Prostate gland (tissue), 2 donors: ENCODE measurements at regions of chr10 and their contacts with region 1.

Region 1: GRCh38 chr10:28302638-28303488 is at the start of gene MPP7:
- DNase-seq: peak; percentile 98
- H3K4me3 ChIP-seq: peak within 1 kb of the TSS; percentile 82 to 89
- H3K27ac ChIP-seq: peak within 1 kb of the TSS; percentile 89 to 95
- H3K4me1 ChIP-seq: no peaks in the 10 kb centered on the region
- H3K27me3 ChIP-seq: no peaks in the 10 kb centered on the region
- CTCF ChIP-seq: peak; percentile 20 to 71 (median 44)
- POLR2A ChIP-seq: peak; percentile 70
- total RNA-seq, gene MPP7: 10.1 to 16.1 TPM

Region 2: DNA sequence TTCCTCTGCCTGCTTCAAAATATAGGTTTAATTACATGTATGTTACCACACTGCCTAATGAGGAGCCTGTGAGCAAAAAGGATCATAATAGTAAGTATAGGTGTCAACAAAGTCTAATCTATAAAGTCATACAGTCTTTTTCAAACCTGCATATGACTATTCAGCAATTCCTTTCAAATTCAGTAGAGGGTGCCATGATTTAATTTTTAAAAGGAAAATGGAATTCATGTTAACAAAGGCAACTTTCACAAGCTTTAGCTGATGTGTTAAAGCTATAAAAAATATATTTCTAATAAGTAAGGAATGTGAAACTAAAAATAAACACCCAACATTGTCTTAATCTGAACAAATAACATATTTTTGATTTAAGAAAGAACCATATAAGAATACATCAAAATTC is 52.1 kb before region 1 on chr10:
- intact Hi-C with region 1: loop called (anchors 2 kb)
- DNase-seq: no peak
- H3K4me3 ChIP-seq: no peak overlapping the region
- H3K27ac ChIP-seq: no peak overlapping the region
- H3K4me1 ChIP-seq: no peaks in the 10 kb centered on the region
- H3K27me3 ChIP-seq: no peaks in the 10 kb centered on the region
- CTCF ChIP-seq: peak; percentile 19 to 74 (median 52)
- POLR2A ChIP-seq: no peak

Region 3: GRCh38 chr10:28328346-28328745 is 25.5 kb after region 1 on chr10:
- intact Hi-C with region 1: loop called (anchors 2 kb)
- DNase-seq: no peak
- H3K4me3 ChIP-seq: no peak overlapping the region
- H3K27ac ChIP-seq: peak overlapping the region; percentile 62 to 66
- H3K4me1 ChIP-seq: no peaks in the 10 kb centered on the region
- H3K27me3 ChIP-seq: no peaks in the 10 kb centered on the region
- CTCF ChIP-seq: no peak
- POLR2A ChIP-seq: no peak

Region 4: GRCh38 chr10:28381903-28382347 is 79.1 kb after region 1 on chr10:
- intact Hi-C with region 1: loop called (anchors 2 kb)
- DNase-seq: peak; percentile 85
- H3K4me3 ChIP-seq: no peak overlapping the region
- H3K27ac ChIP-seq: no peak overlapping the region
- H3K4me1 ChIP-seq: no peaks in the 10 kb centered on the region
- H3K27me3 ChIP-seq: no peaks in the 10 kb centered on the region
- CTCF ChIP-seq: peak; percentile 95 to 99 (median 97)
- POLR2A ChIP-seq: no peak

Region 5: GRCh38 chr10:28425422-28425821 is 122.6 kb after region 1 on chr10:
- intact Hi-C with region 1: no loop called
- DNase-seq: no peak
- H3K4me3 ChIP-seq: no peak overlapping the region
- H3K27ac ChIP-seq: no peak overlapping the region
- H3K4me1 ChIP-seq: no peaks in the 10 kb centered on the region
- H3K27me3 ChIP-seq: no peaks in the 10 kb centered on the region
- CTCF ChIP-seq: no peak
- POLR2A ChIP-seq: no peak